MCF 10A (cell line): ENCODE measurements at regions of chr3 and their contacts with region 1.

Region 1: DNA sequence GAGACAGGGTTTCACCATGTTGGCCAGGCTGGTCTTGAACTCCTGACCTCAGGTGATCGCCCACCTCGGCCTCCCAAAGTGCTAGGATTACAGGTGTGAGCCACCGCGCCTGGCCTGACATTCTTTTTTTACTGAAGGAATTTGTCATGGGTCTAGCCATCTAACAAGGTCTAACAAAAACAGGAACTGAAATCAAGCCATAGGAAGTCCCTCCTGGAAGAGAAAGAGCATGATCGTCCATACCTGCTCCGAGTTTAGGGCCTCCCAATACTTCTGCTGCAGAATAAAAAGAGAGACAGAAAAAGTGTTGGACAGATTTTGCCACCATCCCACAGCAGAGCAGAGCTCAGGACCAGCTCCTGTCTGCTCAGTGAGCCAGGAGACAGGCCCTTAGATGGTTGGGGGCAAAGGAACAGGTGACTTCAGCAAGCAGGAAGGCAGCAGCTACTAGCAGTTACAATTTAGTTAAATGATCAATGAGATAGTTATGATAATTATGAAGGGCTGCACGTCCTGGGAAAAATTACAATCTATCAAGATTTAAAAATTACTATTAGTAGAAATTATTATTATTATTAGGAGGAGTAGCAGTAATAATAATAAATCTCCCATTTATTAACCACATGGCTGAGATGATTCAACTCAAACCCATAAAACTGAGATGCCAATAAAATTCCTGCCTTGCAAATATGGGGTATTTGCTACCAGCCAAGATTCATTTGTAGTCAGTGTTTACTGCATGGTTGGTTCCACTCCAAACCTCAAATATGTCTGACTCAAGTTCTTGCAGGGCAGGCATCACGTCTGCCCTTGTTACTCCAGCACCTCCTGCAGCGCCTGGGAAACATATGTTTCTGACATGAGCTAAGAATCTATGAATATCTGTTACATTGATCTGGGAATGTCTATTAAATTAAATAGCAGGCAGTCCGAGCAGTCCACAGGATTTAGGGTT is 40.1 kb downstream of the TMEM44 start:
- DNase-seq: peak; percentile 97
- H3K4me3 Mint-ChIP-seq: peak overlapping the region; percentile 12
- H3K27ac Mint-ChIP-seq: no peak overlapping the region
- H3K4me1 Mint-ChIP-seq: peaks cover 7% of the 10 kb centered on the region
- H3K27me3 Mint-ChIP-seq: no peaks in the 10 kb centered on the region
- CTCF ChIP-seq: no peak

Region 2: GRCh38 chr3:194121891-194122631 is 471.0 kb before region 1 on chr3:
- CTCF ChIA-PET with region 1: no interaction called
- POLR2A ChIA-PET with region 1: no interaction called
- intact Hi-C with region 1: no loop called
- DNase-seq: peak; percentile 27
- H3K4me3 Mint-ChIP-seq: no peak overlapping the region
- H3K27ac Mint-ChIP-seq: no peak overlapping the region
- H3K4me1 Mint-ChIP-seq: peaks cover 15% of the 10 kb centered on the region
- H3K27me3 Mint-ChIP-seq: peaks cover 11% of the 10 kb centered on the region
- CTCF ChIP-seq: no peak

Region 3: DNA sequence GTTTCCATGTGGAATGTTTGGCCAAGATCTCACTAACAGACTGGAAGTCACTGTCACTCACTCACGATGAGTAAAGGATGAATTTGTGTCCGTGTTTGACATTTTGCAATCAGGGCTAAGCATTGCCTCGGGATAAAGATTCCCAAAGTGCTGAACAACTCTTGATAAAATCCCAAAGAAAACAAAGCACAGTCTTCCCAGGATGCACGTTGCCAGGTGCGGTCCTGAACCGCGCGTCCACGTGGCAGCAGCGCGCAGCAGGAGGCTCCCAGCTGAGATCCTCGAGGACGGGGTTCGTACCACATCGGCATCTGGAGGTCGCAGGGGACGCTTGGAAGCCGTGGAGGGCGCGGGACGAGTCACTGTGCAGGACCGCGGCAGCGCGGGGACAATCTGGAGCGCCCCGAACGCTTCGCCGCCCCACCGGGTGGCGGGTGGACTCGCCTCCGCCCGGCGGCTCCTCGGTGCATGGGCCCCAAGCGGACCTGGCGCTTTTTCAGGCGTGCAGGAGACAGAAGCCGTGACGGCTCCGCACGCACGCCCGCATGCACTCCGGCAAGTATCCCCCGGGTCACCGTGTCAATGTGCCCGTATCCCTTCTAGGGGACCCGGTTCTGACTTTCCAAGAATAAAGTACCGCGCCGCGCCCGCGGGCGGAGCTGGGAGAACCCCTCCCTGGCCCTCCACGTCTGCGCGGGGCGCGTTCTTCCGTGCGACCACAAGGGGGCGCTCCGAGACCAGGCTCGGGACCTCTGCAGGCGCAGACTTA is 259.7 kb before region 1 on chr3:
- CTCF ChIA-PET with region 1: interaction called, 3 read pairs
- POLR2A ChIA-PET with region 1: no interaction called
- intact Hi-C with region 1: loop called (anchors 2 kb)
- DNase-seq: peak; percentile 97
- H3K4me3 Mint-ChIP-seq: peak overlapping the region; percentile 77
- H3K27ac Mint-ChIP-seq: peak overlapping the region; percentile 90
- H3K4me1 Mint-ChIP-seq: peaks cover 28% of the 10 kb centered on the region
- H3K27me3 Mint-ChIP-seq: no peaks in the 10 kb centered on the region
- CTCF ChIP-seq: peak; percentile 97

Region 4: DNA sequence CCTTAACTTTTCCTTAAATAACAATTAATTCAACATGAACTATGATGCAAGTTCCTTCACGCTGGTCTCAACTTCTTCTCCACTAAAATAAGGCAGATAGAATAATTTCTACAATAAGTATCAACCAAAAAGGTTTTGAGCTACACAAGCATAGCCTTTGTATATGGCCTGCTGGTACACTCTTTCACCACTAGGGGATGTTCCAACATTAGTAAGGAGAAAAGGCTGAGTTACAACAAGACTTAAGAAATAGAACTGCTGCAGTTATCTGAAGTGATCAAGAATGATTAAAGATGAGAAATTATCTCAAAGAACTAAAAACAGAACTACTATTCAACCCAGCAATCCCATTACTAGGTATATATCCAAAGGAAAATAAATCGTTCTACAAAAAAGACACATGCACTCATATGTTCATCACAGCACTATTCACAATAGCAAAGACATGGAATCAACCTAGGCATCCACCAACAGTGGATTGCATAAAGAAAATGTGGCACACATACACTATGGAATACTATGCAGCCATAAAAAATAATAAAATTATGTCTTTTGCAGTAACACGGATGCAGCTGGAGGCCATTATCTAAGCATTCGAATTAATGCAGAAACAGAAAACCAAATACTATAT is 120.7 kb before region 1 on chr3:
- CTCF ChIA-PET with region 1: interaction called, 160 read pairs
- POLR2A ChIA-PET with region 1: interaction called, 46 read pairs
- intact Hi-C with region 1: loop called (anchors 1 kb)
- DNase-seq: peak; percentile 71
- H3K4me3 Mint-ChIP-seq: no peak overlapping the region
- H3K27ac Mint-ChIP-seq: no peak overlapping the region
- H3K4me1 Mint-ChIP-seq: peaks cover 17% of the 10 kb centered on the region
- H3K27me3 Mint-ChIP-seq: no peaks in the 10 kb centered on the region
- CTCF ChIP-seq: peak; percentile 90

Region 5: DNA sequence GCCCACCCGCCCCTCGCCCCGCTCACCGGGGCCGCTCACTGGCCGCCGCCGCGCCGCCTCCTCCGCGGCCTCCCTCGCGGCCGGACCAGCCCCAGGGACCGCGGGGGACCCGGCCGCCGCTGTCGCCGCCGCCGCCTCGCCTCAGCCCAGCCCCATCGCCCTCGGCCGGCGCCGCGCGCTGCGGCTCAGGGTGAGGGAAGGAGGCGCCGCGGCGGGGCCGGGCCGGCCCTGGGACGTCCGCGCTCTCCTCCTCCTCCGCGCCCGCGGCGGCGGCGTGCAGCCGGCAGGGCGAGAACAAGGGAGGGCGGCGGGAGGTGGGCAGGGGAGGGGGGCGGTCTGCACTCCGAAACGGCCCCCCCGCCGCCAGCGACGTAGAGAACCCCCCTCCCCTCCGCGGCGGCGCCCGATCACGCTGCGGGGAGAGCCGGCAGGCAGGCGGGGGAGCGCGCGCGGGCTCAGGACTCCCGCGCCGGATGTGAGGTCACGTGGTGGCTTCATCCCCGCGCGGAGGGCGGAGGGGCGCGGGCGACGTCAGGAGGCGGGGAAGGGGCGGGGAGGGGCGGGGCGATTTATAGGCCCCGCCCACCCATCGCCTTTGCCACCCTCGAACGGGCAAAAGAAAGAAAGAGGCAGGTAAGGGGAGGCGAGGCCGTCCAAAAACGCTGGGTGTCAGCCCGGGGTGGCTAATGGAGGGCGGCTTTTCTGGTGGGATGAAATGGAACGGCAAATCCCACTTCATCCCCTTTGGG is 106.4 kb before region 1 on chr3 and contains the start of gene ATP13A3:
- CTCF ChIA-PET with region 1: interaction called, 7 read pairs
- POLR2A ChIA-PET with region 1: interaction called, 25 read pairs
- intact Hi-C with region 1: loop called (anchors 1 kb)
- DNase-seq: peak; percentile 90
- H3K4me3 Mint-ChIP-seq: peak within 1 kb of the TSS; percentile 86
- H3K27ac Mint-ChIP-seq: peak within 1 kb of the TSS; percentile 92
- H3K4me1 Mint-ChIP-seq: peaks cover 30% of the 10 kb centered on the region
- H3K27me3 Mint-ChIP-seq: no peaks in the 10 kb centered on the region
- CTCF ChIP-seq: no peak
- total RNA-seq, gene ATP13A3: 119 and 125 TPM in 2 replicates

Region 6: DNA sequence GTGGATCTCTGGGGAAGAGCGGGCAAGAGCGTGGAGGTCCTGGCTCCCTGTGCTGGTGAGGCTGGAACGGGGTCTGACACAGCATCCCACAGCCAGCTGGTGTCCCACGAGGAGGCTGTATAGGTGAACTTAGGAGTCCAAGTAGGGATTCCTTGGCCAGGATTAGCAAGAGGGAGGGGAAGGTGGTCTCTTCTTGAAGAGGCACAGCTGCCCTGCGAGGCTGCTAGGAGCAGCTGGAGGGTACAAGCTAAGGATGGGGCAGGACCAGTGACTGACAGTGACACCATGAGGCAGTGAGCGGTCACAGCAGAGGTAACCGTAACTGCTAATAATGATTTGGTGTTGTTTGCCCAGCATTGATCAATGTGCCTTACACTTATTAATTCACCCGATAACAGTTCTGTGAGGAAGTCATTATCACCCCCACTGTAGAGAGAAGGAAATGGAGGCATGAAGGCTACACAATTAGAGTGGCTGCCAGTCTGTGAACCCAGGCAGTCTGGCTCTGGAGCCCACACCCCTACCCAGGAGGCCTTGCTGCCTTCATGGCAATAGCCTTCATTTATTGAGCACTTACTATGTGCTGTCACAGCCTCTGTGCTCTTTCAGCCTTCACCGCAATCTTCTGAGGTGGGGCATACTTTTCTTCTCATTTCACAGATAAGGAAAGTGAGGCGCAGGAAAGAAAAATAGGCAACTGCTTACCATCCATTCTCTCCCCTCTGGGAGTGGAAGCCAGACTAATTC is 19.2 kb before region 1 on chr3:
- CTCF ChIA-PET with region 1: interaction called, 15 read pairs
- POLR2A ChIA-PET with region 1: interaction called, 5 read pairs
- intact Hi-C with region 1: loop called (anchors 1 kb)
- DNase-seq: peak; percentile 69
- H3K4me3 Mint-ChIP-seq: no peak overlapping the region
- H3K27ac Mint-ChIP-seq: no peak overlapping the region
- H3K4me1 Mint-ChIP-seq: peaks cover 38% of the 10 kb centered on the region
- H3K27me3 Mint-ChIP-seq: no peaks in the 10 kb centered on the region
- CTCF ChIP-seq: peak; percentile 41